Dendritic cell treated with granulocyte-macrophage colony-stimulating factor and Interleukin-4, amounts not matched to agents 40 ng/mL and 50 ng/mL, for 4 days (primary cell): ENCODE measurements at regions of chr6 and their contacts with region 1.

Region 1: GRCh38 chr6:154928325-154928922 is 66.7 kb upstream of the TIAM2 start:
- H3K4me3 Mint-ChIP-seq: no peak overlapping the region
- H3K27ac Mint-ChIP-seq: no peak overlapping the region
- H3K4me1 Mint-ChIP-seq: peaks cover 8% of the 10 kb centered on the region
- H3K27me3 Mint-ChIP-seq: no peaks in the 10 kb centered on the region

Region 2: DNA sequence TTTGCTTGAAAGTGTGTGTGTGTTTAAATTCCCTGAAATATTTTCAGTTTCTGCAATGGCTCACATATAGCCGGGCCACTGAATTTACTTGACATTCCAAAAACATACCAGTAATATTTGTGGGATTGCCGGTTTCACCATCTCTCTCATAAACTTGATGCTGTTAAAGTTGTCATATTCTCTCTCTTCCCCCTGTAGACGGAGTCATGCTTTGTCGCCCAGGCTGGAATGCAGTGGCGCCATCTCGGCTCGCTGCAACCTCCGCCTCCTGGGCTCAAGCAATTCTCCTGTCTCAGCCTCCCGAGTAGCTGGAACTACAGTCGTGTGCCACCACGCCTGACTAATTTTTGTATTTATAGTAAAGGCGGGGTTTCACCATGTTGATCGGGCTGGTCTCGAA is 188.8 kb after region 1 on chr6:
- intact Hi-C with region 1: no loop called
- H3K4me3 Mint-ChIP-seq: no peak overlapping the region
- H3K27ac Mint-ChIP-seq: no peak overlapping the region
- H3K4me1 Mint-ChIP-seq: peaks cover 6% of the 10 kb centered on the region
- H3K27me3 Mint-ChIP-seq: peaks cover 13% of the 10 kb centered on the region

Region 3: GRCh38 chr6:155253337-155253736 is 324.9 kb after region 1 on chr6:
- intact Hi-C with region 1: loop called (anchors 5 kb)
- H3K4me3 Mint-ChIP-seq: no peak overlapping the region
- H3K27ac Mint-ChIP-seq: no peak overlapping the region
- H3K4me1 Mint-ChIP-seq: no peaks in the 10 kb centered on the region
- H3K27me3 Mint-ChIP-seq: no peaks in the 10 kb centered on the region